ENCODE measurements at regions of chr5 and their contacts with region 1.

Region 1: GRCh38 chr5:33936004-33936380 is 194 bp upstream of the RXFP3 start:
- DNase-seq: peak in 1 of 2 donors; percentile 32
- H3K4me3 ChIP-seq: no peak overlapping the region
- H3K27ac ChIP-seq: no peak overlapping the region
- H3K4me1 ChIP-seq: peaks cover 0 to 7% of the 10 kb centered on the region in 2 donors
- H3K27me3 ChIP-seq: peaks cover 8 to 23% of the 10 kb centered on the region in 2 donors
- CTCF ChIP-seq: peak; percentile 13 to 37 (median 25)
- POLR2A ChIP-seq: no peak

Region 2: DNA sequence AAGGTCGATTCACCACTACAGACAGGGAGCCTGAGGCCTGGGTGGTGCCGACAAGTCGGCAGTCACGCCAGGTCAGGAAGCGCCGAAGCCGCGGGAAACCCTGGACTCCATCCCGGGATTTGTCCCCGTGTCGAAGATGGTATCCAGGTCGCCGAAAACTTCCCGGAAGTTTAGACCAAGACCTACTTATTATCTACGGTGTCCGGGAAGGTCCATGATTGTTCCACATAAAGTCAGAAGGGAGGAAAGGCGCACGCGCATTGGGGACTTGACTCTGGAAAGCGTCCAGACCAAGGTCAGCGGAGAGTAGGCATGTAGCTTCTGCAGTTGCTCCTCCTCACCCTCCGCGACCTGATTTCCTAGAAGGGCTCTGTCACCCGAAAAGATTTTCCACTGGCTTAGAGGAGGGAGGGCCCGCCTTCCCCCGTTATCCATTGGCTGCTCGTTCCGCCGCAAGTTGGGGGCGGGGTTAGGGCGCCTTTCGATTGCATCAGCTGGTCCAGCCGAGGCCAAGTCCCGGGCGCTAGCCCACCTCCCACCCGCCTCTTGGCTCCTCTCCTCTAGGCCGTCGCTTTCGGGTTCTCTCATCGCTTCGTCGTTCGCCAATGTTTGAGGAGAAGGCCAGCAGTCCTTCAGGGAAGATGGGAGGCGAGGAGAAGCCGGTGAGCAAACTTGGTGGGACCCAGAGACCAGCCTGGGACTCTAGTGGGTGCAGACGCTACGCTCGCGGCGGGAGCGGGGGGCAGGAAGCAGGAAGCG is 495.3 kb before region 1 on chr5 and contains the start of gene TARS1:
- intact Hi-C with region 1: loop called (anchors 10 kb)
- DNase-seq: peak; percentile 99 to 100
- H3K4me3 ChIP-seq: peak within 1 kb of the TSS; percentile 81 to 86
- H3K27ac ChIP-seq: peak within 1 kb of the TSS; percentile 84 to 97
- H3K4me1 ChIP-seq: peaks cover 0 to 5% of the 10 kb centered on the region in 2 donors
- H3K27me3 ChIP-seq: no peaks in the 10 kb centered on the region
- CTCF ChIP-seq: peak in 2 of 4 experiments; percentile 24 to 26
- POLR2A ChIP-seq: peak; percentile 66 to 75
- total RNA-seq, gene TARS1: 45.0 to 218 (median 93.4) TPM

Region 3: GRCh38 chr5:33537240-33537639 is 398.8 kb before region 1 on chr5:
- intact Hi-C with region 1: no loop called
- DNase-seq: no peak
- H3K4me3 ChIP-seq: no peak overlapping the region
- H3K27ac ChIP-seq: no peak overlapping the region
- H3K4me1 ChIP-seq: no peaks in the 10 kb centered on the region
- H3K27me3 ChIP-seq: no peaks in the 10 kb centered on the region
- CTCF ChIP-seq: no peak
- POLR2A ChIP-seq: no peak